Prostate gland (tissue), 2 donors: ENCODE measurements at regions of chr1 and their contacts with region 1.

Region 1: DNA sequence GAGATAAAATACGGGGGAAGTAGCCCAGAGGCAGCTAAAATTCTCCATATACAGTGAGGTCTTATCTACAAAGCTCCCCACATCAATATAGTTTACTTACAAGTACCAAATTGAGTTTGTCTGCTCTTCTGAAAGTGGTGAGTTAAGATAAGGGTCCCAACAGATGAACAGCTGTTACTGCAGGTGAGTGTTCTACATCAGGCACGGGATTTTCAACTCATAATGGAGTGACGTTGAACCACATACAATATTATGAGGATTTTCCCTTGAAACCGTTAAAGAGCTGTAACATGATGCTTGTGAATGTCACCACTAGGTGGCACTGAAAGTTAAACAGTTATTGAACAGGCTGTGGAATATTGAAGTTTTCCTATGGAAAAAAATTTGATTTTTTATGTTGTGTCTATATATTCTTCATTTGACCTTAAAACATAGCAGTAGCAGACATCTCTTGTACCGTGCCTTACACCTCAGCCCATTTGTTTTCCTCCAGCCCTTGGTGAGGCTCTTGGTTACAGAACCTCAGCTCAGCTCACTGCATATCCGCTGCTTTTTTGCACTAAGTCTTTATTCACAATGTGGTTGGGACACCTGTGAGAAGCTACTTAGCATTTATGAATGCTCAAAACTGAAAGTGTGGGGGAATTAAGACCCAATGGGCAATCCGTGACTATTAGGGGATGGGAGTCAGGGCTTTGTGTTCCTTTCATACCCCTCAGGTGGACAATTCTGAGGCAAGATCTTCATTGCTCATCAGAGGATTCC is 23.2 kb downstream of the CD1D start:
- DNase-seq: peak; percentile 34
- H3K4me3 ChIP-seq: no peak overlapping the region
- H3K27ac ChIP-seq: no peak overlapping the region
- H3K4me1 ChIP-seq: no peaks in the 10 kb centered on the region
- H3K27me3 ChIP-seq: no peaks in the 10 kb centered on the region
- CTCF ChIP-seq: peak; percentile 65 to 74 (median 68)
- POLR2A ChIP-seq: no peak

Region 2: DNA sequence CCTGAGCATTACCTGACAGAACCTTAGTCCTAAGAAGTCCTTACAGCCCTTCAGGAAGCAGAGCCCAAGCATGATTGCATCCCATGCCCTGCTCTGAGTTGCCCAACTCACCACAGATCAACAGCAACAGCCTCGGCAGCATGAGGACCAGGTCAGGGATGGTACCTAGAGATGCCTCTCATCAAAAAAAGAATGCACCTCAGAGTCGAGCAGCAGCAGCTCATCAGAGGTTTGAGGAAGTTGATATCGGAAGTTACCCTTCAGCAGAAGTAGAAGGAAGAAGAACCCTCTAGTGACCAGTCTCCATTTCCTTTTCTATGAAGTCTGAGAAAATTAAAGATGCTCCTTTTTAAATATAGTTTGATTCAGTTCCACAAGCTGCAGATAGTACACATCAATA is 384.0 kb before region 1 on chr1 and contains the start of gene FCRL1:
- intact Hi-C with region 1: no loop called
- DNase-seq: no peak
- H3K4me3 ChIP-seq: no peak within 1 kb of the TSS
- H3K27ac ChIP-seq: no peak within 1 kb of the TSS
- H3K4me1 ChIP-seq: no peaks in the 10 kb centered on the region
- H3K27me3 ChIP-seq: no peaks in the 10 kb centered on the region
- CTCF ChIP-seq: no peak
- POLR2A ChIP-seq: no peak
- total RNA-seq, gene FCRL1: 0.09 TPM in 1 of 2 donors, not detected in the other

Region 3: GRCh38 chr1:158998781-158999161 is 794.9 kb after region 1 on chr1:
- intact Hi-C with region 1: loop called (anchors 5 kb)
- DNase-seq: peak; percentile 45
- H3K4me3 ChIP-seq: peak overlapping the region in 1 of 2 donors; percentile 23
- H3K27ac ChIP-seq: peak overlapping the region; percentile 68 to 72
- H3K4me1 ChIP-seq: no peaks in the 10 kb centered on the region
- H3K27me3 ChIP-seq: no peaks in the 10 kb centered on the region
- CTCF ChIP-seq: peak; percentile 86 to 95 (median 94)
- POLR2A ChIP-seq: peak; percentile 22

Region 4: GRCh38 chr1:159071970-159072582 is 868.2 kb after region 1 on chr1:
- intact Hi-C with region 1: loop called (anchors 10 kb)
- DNase-seq: no peak
- H3K4me3 ChIP-seq: no peak overlapping the region
- H3K27ac ChIP-seq: no peak overlapping the region
- H3K4me1 ChIP-seq: no peaks in the 10 kb centered on the region
- H3K27me3 ChIP-seq: no peaks in the 10 kb centered on the region
- CTCF ChIP-seq: peak; percentile 14 to 78 (median 59)
- POLR2A ChIP-seq: no peak